Uterus (tissue), 4 donors: ENCODE measurements at regions of chr17 and their contacts with region 1.

Region 1: GRCh38 chr17:17641621-17642409 is 39.4 kb upstream of the RAI1 start:
- DNase-seq: peak; percentile 76 to 77
- H3K4me3 ChIP-seq: no peak overlapping the region
- H3K27ac ChIP-seq: no peak overlapping the region
- H3K4me1 ChIP-seq: no peaks in the 10 kb centered on the region
- H3K27me3 ChIP-seq: no peaks in the 10 kb centered on the region
- CTCF ChIP-seq: peak; percentile 86 to 95 (median 91)
- POLR2A ChIP-seq: no peak

Region 2: DNA sequence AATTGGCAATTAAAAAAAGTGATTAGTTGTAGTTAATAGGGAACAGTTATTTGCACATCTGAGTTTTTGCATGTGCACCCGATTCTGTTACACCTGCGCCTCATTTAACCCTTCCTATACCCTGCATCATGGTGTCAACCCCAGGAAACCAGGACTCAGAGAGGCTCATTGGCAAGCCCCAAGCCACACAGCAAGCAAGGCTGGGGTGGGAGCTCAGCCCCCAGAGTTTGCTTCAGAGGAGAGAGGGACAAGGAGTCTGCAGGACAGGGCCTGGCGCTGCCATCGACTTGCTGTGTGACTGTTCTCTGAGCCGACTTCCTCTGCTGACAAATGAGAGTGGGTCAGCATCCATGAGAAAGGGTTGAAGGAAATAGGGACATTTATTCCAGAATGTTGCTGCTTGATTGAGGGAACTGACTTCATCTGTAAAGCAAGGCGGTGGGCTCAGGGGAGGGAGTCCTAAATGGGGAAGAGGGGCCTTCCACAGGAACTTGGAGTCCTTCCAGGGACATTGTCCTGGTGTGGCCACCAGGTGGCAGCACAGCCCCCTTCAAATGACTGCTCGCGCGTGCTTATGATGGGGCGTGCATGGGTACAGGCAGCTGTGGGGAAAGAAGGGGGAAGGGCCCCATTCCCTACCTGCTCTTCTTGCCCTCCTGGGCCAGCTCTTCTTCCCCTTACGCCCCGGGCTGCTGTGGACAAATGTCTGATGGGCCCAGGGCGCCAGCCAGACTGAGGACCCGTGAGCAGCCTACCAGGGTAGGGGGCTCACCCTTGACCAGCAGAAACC is 287.1 kb before region 1 on chr17:
- intact Hi-C with region 1: loop called (anchors 2 kb)
- DNase-seq: peak; percentile 64 to 65
- H3K4me3 ChIP-seq: no peak overlapping the region
- H3K27ac ChIP-seq: no peak overlapping the region
- H3K4me1 ChIP-seq: no peaks in the 10 kb centered on the region
- H3K27me3 ChIP-seq: no peaks in the 10 kb centered on the region
- CTCF ChIP-seq: peak; percentile 86 to 90 (median 88)
- POLR2A ChIP-seq: no peak

Region 3: DNA sequence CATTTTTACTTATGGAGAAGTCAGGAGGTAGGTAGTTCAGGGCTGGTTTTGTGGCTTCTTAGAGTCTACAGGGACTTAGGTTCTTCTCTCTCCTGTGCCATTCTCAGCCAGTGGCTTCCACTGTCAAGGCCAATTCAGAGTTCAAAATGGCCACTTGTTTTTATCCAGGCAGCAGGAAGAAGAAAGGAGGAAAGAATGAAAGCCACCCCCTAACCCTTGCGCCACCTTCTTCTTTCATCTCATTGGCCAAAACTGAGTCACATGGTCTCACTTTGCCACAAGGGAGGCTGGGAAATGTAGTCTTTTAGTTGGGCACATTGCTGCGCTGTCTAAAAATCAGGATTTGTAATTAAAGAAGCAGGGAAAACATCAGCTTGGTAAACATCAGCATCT is 225.8 kb before region 1 on chr17:
- intact Hi-C with region 1: no loop called
- DNase-seq: no peak
- H3K4me3 ChIP-seq: no peak overlapping the region
- H3K27ac ChIP-seq: no peak overlapping the region
- H3K4me1 ChIP-seq: no peaks in the 10 kb centered on the region
- H3K27me3 ChIP-seq: no peaks in the 10 kb centered on the region
- CTCF ChIP-seq: no peak
- POLR2A ChIP-seq: no peak

Region 4: GRCh38 chr17:17739388-17740066 is 97.7 kb after region 1 on chr17:
- intact Hi-C with region 1: no loop called
- DNase-seq: peak; percentile 73 to 74
- H3K4me3 ChIP-seq: no peak overlapping the region
- H3K27ac ChIP-seq: peak overlapping the region; percentile 71 to 81
- H3K4me1 ChIP-seq: peaks cover 30 to 38% of the 10 kb centered on the region in 2 donors
- H3K27me3 ChIP-seq: no peaks in the 10 kb centered on the region
- CTCF ChIP-seq: no peak
- POLR2A ChIP-seq: peak in 1 of 2 donors; percentile 17